Activated naive CD4-positive, alpha-beta T cell treated with anti-CD3 and anti-CD28 coated beads for 36 hours (primary cell): ENCODE measurements at regions of chr12 and their contacts with region 1.

Region 1: DNA sequence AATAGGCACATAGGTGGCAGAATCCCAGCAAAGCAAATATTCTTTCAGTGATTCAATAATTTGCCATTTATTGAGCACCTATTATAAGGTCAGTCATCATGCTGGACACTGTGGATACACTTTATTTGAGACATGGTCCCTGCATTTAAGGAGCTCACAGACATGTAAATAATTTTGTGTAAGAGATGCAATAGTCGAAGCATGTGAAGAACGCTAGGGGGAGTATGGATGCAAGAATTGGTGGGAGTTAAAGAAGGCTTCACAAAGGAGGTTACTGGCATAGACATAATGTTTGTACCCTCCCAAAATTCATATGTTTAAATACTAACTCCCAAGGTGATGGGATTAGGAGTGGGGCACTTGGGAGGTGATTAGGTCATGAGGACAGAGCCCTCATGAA is 260.6 kb upstream of the GARIN6 start:
- DNase-seq: no peak
- H3K4me3 Mint-ChIP-seq: no peak overlapping the region
- H3K27ac Mint-ChIP-seq: no peak overlapping the region
- H3K4me1 Mint-ChIP-seq: no peaks in the 10 kb centered on the region
- H3K27me3 Mint-ChIP-seq: no peaks in the 10 kb centered on the region

Region 2: DNA sequence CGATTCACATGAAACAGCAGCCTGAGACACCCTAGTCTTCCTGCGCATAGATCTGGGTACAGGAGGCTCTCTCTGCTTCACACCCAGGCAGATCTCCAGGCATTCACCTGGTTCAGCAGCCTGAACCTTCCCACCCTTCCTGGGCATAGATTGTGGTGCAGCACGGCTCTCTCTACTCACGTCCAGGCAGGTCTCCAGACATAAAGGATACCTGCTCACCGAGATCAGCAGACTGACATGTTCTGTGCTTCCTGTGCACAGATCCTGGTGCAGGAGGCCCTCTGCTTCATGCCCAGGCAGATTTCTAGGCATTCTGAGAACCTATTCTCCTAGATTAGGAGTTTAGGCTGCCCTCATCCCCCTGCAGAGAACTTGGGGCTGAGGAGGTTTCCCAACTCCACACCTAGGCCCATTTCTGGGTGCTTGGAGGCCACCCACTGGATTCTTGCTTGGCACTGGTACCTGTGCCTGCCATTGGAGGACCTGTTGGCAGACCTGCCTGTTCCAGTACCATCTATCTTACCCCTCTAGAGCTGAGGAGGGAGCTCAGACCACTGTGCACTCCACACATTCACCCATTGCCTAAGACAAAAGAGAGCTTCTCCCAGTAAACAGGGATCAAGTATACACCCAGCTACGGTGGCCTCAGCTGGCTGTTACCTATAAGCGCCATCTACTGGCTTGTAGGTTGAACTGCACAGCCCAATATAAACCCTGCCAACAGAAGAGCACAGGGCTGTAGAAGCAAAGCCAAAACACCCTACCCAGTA is 232.7 kb after region 1 on chr12:
- CTCF ChIA-PET with region 1: no interaction called
- intact Hi-C with region 1: loop called (anchors 2 kb)
- DNase-seq: no peak
- H3K4me3 Mint-ChIP-seq: no peak overlapping the region
- H3K27ac Mint-ChIP-seq: no peak overlapping the region
- H3K4me1 Mint-ChIP-seq: no peaks in the 10 kb centered on the region
- H3K27me3 Mint-ChIP-seq: no peaks in the 10 kb centered on the region